ENCODE measurements at regions of chr2 and their contacts with region 1.

Region 1: DNA sequence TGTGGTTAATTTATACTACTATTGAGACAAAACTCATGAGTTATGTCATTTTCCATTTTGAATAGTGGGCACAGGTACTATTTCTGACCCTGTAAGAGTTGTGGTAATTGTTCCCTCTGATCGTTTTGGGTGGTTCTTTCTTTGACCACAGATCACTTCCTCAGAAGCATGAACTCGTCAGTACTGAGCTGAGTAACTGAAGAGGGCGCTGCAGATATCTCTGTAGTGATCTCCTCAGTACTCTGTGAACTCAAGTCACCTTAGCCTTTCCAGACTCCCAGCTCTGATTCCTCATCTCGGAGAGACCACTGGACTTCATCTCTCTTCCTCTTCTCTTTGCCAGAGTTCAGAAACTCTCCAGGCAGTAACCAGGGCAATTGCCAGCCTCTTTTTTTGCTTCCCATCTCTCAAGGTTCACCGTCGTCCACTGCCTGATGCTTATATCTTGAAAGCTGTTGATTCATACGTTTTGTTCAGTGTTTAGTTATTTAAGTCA is 9.4 kb upstream of the IL1RL1 start:
- DNase-seq: peak; percentile 47
- ATAC-seq: peak; percentile 100
- H3K4me3 Mint-ChIP-seq: no peak overlapping the region
- H3K27ac Mint-ChIP-seq: no peak overlapping the region
- H3K4me1 Mint-ChIP-seq: no peaks in the 10 kb centered on the region
- H3K27me3 Mint-ChIP-seq: no peaks in the 10 kb centered on the region; the same call in 1 of the 2 replicates
- CTCF ChIP-seq: no peak

Region 2: DNA sequence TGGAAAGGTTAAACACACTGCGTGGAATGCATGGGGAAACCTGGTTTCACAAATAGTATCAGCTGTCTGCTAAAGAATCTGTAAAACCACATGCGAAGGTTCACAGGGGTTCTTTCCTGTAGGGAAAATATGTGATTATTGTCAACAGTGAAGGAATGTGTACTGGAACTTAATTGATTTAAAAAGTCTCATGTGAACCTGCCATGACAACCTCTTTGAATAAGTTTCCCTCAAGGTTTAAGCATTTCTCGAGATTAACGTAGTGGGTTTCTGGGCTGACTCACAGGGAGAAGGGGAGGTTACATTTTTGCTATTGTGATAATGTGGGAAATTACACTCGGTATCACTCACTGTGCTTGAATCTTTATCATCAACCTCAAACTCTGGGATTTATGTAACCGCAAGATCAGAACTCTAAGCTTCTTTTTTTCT is 187.6 kb before region 1 on chr2:
- CTCF ChIA-PET with region 1: no interaction called
- POLR2A ChIA-PET with region 1: no interaction called
- DNase-seq: no peak
- ATAC-seq: no peak
- H3K4me3 Mint-ChIP-seq: no peak overlapping the region
- H3K27ac Mint-ChIP-seq: no peak overlapping the region; the same call in 1 of the 2 replicates
- H3K4me1 Mint-ChIP-seq: peaks cover 16% of the 10 kb centered on the region
- H3K27me3 Mint-ChIP-seq: no peaks in the 10 kb centered on the region; the same call in 1 of the 2 replicates
- CTCF ChIP-seq: no peak

Region 3: DNA sequence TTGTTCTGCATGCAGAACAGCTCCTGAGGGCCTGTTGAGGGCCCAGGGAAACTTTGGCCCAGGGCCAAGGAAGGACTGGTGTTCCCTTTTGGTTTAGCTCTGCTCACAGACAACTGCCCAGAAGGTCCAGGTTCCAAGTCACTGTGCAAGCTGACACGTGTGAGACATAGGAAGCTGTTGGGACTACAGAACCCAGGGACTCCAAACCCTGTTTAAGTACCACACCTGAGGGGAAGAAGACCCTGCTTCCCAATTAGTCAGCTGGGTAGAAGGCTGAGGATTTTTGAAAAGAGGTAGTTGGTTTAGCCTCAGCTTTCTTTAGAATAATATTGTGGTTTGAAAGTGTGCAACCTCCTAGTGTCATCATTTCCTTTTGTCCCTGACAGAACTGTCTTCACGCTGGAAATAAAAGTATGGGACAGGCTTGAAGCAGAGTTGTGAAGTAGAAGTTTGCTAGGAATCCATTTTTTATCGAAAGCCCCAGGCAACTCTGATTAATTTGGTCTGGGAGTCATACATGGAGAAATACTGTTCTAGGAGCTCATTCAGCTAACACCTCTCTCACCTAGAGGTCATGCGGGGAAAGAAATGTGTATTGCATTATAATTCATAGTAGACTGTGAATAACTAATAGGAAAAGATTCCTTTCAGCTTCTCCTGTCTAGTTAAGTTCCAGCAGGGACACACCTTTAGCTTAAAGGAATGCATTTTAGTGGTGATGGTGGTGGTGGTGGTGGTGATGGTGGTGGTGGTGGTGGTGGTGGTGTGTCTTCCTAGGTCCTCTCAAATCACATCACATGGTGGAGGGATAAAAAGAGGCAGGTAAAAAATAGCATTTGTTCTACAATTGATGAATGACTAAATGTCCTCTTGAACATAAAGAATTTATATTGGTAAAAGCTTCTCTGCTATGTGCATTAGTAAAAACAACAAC is 10.3 kb before region 1 on chr2:
- CTCF ChIA-PET with region 1: interaction called, 10 read pairs
- POLR2A ChIA-PET with region 1: no interaction called
- DNase-seq: no peak
- ATAC-seq: no peak
- H3K4me3 Mint-ChIP-seq: no peak overlapping the region
- H3K27ac Mint-ChIP-seq: no peak overlapping the region
- H3K4me1 Mint-ChIP-seq: no peaks in the 10 kb centered on the region
- H3K27me3 Mint-ChIP-seq: no peaks in the 10 kb centered on the region
- CTCF ChIP-seq: no peak

Region 4: GRCh38 chr2:102355526-102356380 is 53.8 kb after region 1 on chr2 and contains the start of gene IL18R1:
- CTCF ChIA-PET with region 1: interaction called, 12 read pairs
- POLR2A ChIA-PET with region 1: no interaction called
- DNase-seq: peak; percentile 79
- ATAC-seq: peak; percentile 97
- H3K4me3 Mint-ChIP-seq: peak within 1 kb of the TSS; percentile 83
- H3K27ac Mint-ChIP-seq: no peak within 1 kb of the TSS
- H3K4me1 Mint-ChIP-seq: peaks cover 3% of the 10 kb centered on the region; the same call in 1 of the 2 replicates
- H3K27me3 Mint-ChIP-seq: peaks cover 32% of the 10 kb centered on the region
- CTCF ChIP-seq: peak; percentile 59; the same call in 1 of the 2 replicates
- total RNA-seq, gene IL18R1: 0.25 to 0.46 TPM in 2 of 3 replicates, not detected in the other

Region 5: GRCh38 chr2:102376052-102376591 is 74.2 kb after region 1 on chr2:
- CTCF ChIA-PET with region 1: no interaction called
- POLR2A ChIA-PET with region 1: no interaction called
- DNase-seq: no peak
- ATAC-seq: no peak
- H3K4me3 Mint-ChIP-seq: no peak overlapping the region
- H3K27ac Mint-ChIP-seq: no peak overlapping the region
- H3K4me1 Mint-ChIP-seq: no peaks in the 10 kb centered on the region
- H3K27me3 Mint-ChIP-seq: peaks cover 21% of the 10 kb centered on the region
- CTCF ChIP-seq: no peak

Region 6: GRCh38 chr2:102442967-102443828 is 141.3 kb after region 1 on chr2:
- CTCF ChIA-PET with region 1: interaction called, 11 read pairs
- POLR2A ChIA-PET with region 1: no interaction called
- DNase-seq: peak; percentile 15
- ATAC-seq: peak; percentile 72
- H3K4me3 Mint-ChIP-seq: no peak overlapping the region
- H3K27ac Mint-ChIP-seq: no peak overlapping the region
- H3K4me1 Mint-ChIP-seq: no peaks in the 10 kb centered on the region
- H3K27me3 Mint-ChIP-seq: no peaks in the 10 kb centered on the region
- CTCF ChIP-seq: 0 out of 2 replicates have a peak, but pooled peaks have one; percentile 22

Region 7: DNA sequence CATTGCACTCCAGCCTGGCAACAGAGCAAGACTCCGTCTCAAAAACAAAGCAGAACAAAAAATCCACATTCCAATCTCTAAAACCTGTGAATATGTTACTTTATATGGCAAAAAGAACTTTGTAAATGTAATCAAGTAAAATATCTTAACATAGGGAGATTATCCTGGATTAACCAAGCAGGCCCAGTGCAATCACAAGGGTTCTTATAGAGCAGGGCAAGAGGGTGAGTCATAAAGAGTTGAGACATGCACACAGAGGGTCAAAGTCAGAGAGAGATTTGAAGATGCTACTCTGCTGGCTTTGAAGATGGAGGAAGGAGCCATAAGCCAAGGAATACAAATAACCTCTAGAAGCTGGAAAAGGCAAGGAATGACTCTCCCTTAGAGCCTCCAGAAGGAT is 256.5 kb after region 1 on chr2:
- CTCF ChIA-PET with region 1: no interaction called
- POLR2A ChIA-PET with region 1: no interaction called
- DNase-seq: no peak
- ATAC-seq: no peak
- H3K4me3 Mint-ChIP-seq: no peak overlapping the region
- H3K27ac Mint-ChIP-seq: no peak overlapping the region
- H3K4me1 Mint-ChIP-seq: no peaks in the 10 kb centered on the region
- H3K27me3 Mint-ChIP-seq: no peaks in the 10 kb centered on the region
- CTCF ChIP-seq: no peak